Activated CD4-positive, alpha-beta T cell treated with anti-CD3 and anti-CD28 coated beads for 36 hours (primary cell): ENCODE measurements at regions of chr16 and their contacts with region 1.

Region 1: GRCh38 chr16:2155091-2156021 is at the start of gene TRAF7:
- DNase-seq: peak; percentile 98
- ATAC-seq: peak; percentile 95
- H3K4me3 Mint-ChIP-seq: peak within 1 kb of the TSS; percentile 89
- H3K27ac Mint-ChIP-seq: peak within 1 kb of the TSS; percentile 94
- H3K4me1 Mint-ChIP-seq: peaks cover 31% of the 10 kb centered on the region
- H3K27me3 Mint-ChIP-seq: no peaks in the 10 kb centered on the region
- total RNA-seq, gene TRAF7: 70.7 to 93.7 TPM

Region 2: DNA sequence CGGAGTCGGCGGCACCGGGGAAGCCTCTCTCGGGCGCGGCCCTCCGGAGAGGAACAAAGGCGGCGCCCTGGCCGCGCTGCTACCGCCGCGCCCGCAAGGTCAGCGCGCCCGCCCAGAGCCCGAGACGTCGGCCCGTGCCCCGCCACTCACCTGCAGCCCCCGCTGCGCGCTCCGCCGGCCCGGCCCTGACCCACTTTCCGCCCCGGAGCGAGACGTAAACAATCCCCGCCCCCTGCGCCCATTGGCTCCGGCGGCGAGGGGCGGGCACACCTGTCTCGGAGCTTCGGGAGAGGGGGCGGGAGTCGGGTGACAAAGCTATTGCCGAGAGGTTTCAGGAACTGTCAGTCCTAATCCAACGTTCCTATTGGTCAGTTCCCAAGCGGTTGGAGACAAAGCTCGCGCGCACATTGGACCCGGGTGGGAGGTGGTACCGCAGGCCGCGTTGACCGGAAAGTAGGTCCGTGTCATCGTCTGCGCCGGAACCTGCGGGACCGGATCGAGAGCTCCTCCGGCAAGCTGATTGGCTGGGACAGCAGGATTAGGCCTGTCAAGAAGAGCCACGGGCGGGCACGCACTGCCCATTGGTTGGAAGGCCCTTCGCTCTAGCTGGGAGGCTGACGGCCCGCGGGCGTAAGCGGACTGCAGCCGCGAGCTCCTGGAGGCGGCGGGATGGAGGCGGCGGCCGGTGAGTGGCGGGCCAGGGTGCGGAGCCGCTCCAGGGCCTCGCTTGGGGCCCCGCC is 372.8 kb before region 1 on chr16 and contains the starts of genes NUBP2 and SPSB3:
- CTCF ChIA-PET with region 1: interaction called, 9 read pairs
- POLR2A ChIA-PET with region 1: interaction called, 6 read pairs
- intact Hi-C with region 1: loop called in 1 of 2 experiments (anchors 1 kb)
- DNase-seq: peak; percentile 99
- ATAC-seq: peak; percentile 93
- H3K4me3 Mint-ChIP-seq: peak within 1 kb of the TSS; percentile 94
- H3K27ac Mint-ChIP-seq: peak within 1 kb of the TSS; percentile 85
- H3K4me1 Mint-ChIP-seq: peaks cover 26% of the 10 kb centered on the region
- H3K27me3 Mint-ChIP-seq: no peaks in the 10 kb centered on the region
- total RNA-seq, gene NUBP2: 34.4 to 42.4 TPM
- total RNA-seq, gene SPSB3: 12.5 to 13.6 TPM

Region 3: DNA sequence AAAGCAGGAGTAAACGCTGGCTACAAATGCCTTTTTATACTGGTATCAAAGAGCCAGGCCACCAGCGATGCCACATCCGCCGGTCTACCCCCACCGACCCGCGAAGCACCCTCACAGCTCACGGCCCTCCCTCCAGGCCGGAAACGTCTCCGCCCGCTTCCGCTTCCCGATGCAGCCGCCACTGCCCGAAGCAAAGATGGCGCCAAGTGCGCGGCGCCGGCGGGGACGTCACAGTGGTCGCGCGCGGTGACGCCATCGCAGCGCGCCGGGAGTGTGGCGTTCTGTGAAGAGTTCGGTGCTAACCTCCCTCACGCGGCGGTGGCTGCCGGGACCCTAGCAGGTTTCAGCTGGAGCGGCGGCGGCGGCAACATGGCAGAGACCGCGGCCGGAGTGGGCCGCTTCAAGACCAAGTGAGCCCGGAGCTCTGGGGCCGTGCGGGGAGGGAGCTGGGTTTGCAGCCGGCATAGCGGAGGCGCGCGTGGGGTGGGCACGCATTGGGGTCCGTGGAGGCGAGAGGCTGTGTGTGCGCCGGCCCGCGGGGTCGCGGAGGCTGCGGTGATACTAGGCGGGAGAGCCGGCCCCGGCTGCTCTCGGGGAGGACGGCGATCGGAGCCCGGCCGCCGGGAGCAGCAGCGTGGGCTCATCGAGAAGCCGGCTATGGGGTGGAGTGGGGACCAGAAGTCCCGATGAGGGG is 183.4 kb before region 1 on chr16 and contains the start of gene TBL3:
- CTCF ChIA-PET with region 1: no interaction called
- POLR2A ChIA-PET with region 1: interaction called, 9 read pairs
- intact Hi-C with region 1: loop called in 1 of 2 experiments (anchors 1 kb)
- DNase-seq: peak; percentile 98
- ATAC-seq: peak; percentile 97
- H3K4me3 Mint-ChIP-seq: peak within 1 kb of the TSS; percentile 99
- H3K27ac Mint-ChIP-seq: peak within 1 kb of the TSS; percentile 99
- H3K4me1 Mint-ChIP-seq: peaks cover 16% of the 10 kb centered on the region
- H3K27me3 Mint-ChIP-seq: no peaks in the 10 kb centered on the region
- total RNA-seq, gene TBL3: 47.4 to 48.6 TPM

Region 4: DNA sequence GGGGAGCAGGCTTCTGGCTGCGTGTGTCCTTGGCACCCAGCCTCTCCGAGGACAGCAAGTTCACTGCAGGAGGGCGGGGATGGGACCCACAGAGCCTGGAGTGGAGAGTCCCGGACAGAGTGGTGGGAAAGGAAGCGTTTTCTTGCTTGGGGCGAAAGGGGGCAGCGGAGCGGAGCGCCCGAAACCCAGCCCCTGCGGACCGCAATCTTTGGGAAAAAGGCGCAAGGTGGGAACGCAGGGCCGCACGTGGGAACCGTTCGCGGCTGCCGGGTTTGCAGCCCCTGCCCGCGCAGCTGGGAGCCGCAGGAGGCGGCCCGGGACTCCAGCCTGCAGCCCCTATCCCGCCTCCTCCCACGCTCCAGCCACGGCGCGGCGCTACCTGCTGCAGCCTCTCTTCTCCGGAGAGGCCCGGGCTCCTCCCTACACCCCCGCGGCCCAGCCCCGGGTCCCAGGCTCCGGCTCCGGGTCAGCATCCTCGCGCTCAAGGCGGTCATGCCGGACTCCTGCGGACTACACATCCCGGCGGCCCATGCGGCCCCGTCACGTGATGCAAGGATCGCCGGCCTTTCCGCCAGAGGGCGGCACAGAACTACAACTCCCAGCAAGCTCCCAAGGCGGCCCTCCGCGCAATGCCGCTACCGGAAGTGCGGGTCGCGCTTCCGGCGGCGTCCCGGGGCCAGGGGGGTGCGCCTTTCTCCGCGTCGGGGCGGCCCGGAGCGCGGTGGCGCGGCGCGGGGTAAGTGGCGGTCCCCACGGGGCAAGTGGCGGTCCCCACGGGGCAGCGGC is 107.8 kb before region 1 on chr16 and contains the starts of genes NTHL1 and TSC2:
- CTCF ChIA-PET with region 1: interaction called, 8 read pairs
- POLR2A ChIA-PET with region 1: interaction called, 8 read pairs
- intact Hi-C with region 1: loop called in 1 of 2 experiments (anchors 1 kb)
- DNase-seq: peak; percentile 97
- ATAC-seq: peak; percentile 97
- H3K4me3 Mint-ChIP-seq: peak within 1 kb of the TSS; percentile 89
- H3K27ac Mint-ChIP-seq: peak within 1 kb of the TSS; percentile 85
- H3K4me1 Mint-ChIP-seq: peaks cover 18% of the 10 kb centered on the region
- H3K27me3 Mint-ChIP-seq: no peaks in the 10 kb centered on the region
- total RNA-seq, gene NTHL1: 22.6 to 26.1 TPM
- total RNA-seq, gene TSC2: 49.6 to 72.9 TPM

Region 5: GRCh38 chr16:2251483-2252240 is 96.3 kb after region 1 on chr16 and contains the start of gene ECI1:
- CTCF ChIA-PET with region 1: no interaction called
- POLR2A ChIA-PET with region 1: interaction called, 10 read pairs
- intact Hi-C with region 1: loop called (anchors 1 to 5 kb)
- DNase-seq: peak; percentile 92
- ATAC-seq: peak; percentile 87
- H3K4me3 Mint-ChIP-seq: peak within 1 kb of the TSS; percentile 90
- H3K27ac Mint-ChIP-seq: peak within 1 kb of the TSS; percentile 90
- H3K4me1 Mint-ChIP-seq: peaks cover 5% of the 10 kb centered on the region
- H3K27me3 Mint-ChIP-seq: no peaks in the 10 kb centered on the region
- total RNA-seq, gene ECI1: 23.0 to 41.0 TPM

Region 6: GRCh38 chr16:2288726-2289125 is 133.4 kb after region 1 on chr16:
- CTCF ChIA-PET with region 1: no interaction called
- POLR2A ChIA-PET with region 1: no interaction called
- intact Hi-C with region 1: no loop called
- DNase-seq: no peak
- ATAC-seq: no peak
- H3K4me3 Mint-ChIP-seq: no peak overlapping the region
- H3K27ac Mint-ChIP-seq: no peak overlapping the region
- H3K4me1 Mint-ChIP-seq: no peaks in the 10 kb centered on the region
- H3K27me3 Mint-ChIP-seq: no peaks in the 10 kb centered on the region

Region 7: DNA sequence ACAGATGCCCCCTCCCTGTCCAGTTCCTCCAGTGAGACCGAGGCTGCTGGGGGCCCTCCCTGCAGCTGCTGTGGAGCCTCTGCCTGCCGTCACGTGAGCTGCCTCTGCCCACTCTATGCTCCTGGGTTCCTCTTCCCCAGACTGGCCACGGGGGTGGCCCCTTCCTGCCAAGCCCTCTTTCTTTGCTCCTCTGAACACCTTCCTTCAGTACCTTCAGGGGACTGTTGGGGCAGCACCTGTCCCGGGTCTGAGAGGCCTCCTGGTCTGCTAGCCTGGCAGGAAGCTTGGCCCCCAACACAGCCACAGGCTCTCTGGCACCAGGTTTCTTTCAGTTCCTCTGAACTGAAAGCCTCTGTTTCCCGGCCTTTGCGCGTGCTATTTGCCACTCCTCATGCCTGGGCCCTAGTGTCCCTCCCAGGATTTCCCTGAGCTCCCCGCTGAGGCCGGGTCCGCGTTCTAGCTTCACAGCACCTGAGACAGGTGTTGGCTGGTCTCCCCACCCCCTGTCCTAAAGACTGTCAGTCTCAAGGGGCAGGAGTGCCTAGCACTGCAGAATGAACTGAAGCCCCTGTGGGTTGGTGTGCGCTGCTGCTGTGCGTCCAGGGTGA is 351.8 kb after region 1 on chr16:
- CTCF ChIA-PET with region 1: no interaction called
- POLR2A ChIA-PET with region 1: no interaction called
- intact Hi-C with region 1: no loop called
- DNase-seq: no peak
- ATAC-seq: peak; percentile 42
- H3K4me3 Mint-ChIP-seq: no peak overlapping the region
- H3K27ac Mint-ChIP-seq: no peak overlapping the region
- H3K4me1 Mint-ChIP-seq: no peaks in the 10 kb centered on the region
- H3K27me3 Mint-ChIP-seq: no peaks in the 10 kb centered on the region

Region 8: GRCh38 chr16:2720719-2721633 is 565.6 kb after region 1 on chr16:
- CTCF ChIA-PET with region 1: no interaction called
- POLR2A ChIA-PET with region 1: no interaction called
- intact Hi-C with region 1: loop called in 1 of 2 experiments (anchors 1 kb)
- DNase-seq: peak; percentile 95
- ATAC-seq: peak; percentile 91
- H3K4me3 Mint-ChIP-seq: peak overlapping the region; percentile 77
- H3K27ac Mint-ChIP-seq: peak overlapping the region; percentile 83
- H3K4me1 Mint-ChIP-seq: no peaks in the 10 kb centered on the region
- H3K27me3 Mint-ChIP-seq: peaks cover 9% of the 10 kb centered on the region